ENCODE measurements at regions of chr21 and their contacts with region 1.

Region 1: DNA sequence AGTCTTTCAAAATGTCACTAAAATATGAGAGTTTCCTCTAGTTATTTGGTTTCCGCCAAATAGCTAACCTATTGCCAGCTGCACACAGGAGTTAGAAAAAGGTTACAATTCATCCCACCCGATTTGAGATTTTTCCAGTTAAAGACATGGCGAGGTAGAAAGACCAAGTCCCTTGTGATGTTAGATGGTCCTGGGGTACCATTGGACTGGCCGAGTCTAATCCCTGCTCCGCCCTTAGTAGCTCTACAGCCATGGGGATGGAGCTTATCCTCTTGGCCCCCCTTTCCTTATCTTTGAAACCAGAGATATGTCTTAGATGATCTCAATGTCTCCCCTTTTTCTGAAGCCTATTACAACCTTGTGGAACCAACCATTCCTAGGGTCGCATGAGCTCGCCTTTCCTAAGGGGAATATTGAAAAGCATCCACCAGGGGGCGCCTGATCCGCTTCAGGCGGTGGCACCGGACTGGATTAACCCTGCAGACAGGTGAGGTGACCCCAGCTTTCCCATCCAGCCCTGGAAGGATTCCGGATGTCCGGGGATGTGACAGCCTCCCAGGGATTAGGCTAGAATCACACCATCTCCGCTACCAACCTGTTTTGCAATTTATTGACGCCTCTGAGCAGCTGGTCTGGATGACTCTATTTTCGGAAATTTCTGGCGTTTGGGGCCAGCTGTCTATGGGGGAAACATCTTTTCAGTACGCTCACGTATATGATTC is 68.3 kb upstream of the SIM2 start:
- DNase-seq: peak; percentile 36
- H3K4me3 ChIP-seq: no peak overlapping the region
- H3K27ac ChIP-seq: no peak overlapping the region
- H3K4me1 ChIP-seq: no peaks in the 10 kb centered on the region
- H3K27me3 ChIP-seq: peaks cover 12 to 13% of the 10 kb centered on the region in 2 experiments
- CTCF ChIP-seq: peak; percentile 73 to 76
- POLR2A ChIP-seq: no peak

Region 2: DNA sequence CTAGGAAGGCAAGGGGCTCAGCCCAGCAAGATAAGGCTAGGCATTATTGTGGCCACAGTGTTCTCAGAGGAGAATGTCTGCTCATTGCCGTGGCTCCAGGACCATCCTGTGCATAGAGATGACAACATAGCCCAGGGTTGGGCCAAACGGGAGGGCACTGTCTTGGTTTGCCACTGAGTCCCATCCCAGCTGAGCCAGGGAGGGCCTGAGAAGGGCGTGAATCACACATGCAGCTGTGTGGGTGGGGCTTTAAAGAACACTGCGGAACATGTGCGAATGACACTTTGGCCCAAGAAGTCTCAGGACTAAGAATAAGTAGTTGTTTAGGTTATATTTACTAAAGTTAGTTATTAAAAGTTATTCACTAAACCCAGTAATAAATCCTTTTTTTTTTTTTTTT is 226.9 kb before region 1 on chr21:
- CTCF ChIA-PET with region 1: no interaction called
- POLR2A ChIA-PET with region 1: no interaction called
- dilution Hi-C with region 1: no loop called
- intact Hi-C with region 1: no loop called
- DNase-seq: no peak
- H3K4me3 ChIP-seq: no peak overlapping the region
- H3K27ac ChIP-seq: no peak overlapping the region
- H3K4me1 ChIP-seq: peaks cover 4% of the 10 kb centered on the region
- H3K27me3 ChIP-seq: no peaks in the 10 kb centered on the region
- CTCF ChIP-seq: no peak
- POLR2A ChIP-seq: no peak

Region 3: DNA sequence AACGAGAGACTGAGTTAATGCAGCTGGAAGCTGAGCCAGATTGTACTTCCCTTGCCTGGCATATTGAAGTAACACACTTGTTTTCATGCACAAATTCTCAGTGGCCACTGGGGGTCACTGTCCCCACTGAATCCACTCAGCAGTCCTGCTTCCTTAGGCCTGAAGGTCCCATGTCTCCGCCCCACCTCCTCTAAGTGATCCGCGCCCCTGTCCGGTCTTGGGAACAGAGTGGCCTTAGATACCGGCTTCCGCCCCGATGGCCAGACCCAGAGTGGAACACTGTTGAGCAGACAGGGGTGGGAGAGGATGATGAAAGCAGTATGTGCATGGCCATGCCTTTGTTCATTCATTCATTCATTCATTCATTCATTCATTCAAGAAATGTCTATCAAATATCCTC is 210.7 kb before region 1 on chr21:
- CTCF ChIA-PET with region 1: interaction called, 13 read pairs
- POLR2A ChIA-PET with region 1: no interaction called
- dilution Hi-C with region 1: no loop called
- intact Hi-C with region 1: no loop called
- DNase-seq: peak; percentile 93
- H3K4me3 ChIP-seq: no peak overlapping the region
- H3K27ac ChIP-seq: no peak overlapping the region
- H3K4me1 ChIP-seq: peaks cover 2% of the 10 kb centered on the region
- H3K27me3 ChIP-seq: no peaks in the 10 kb centered on the region
- CTCF ChIP-seq: peak; percentile 76 to 80
- POLR2A ChIP-seq: no peak

Region 4: DNA sequence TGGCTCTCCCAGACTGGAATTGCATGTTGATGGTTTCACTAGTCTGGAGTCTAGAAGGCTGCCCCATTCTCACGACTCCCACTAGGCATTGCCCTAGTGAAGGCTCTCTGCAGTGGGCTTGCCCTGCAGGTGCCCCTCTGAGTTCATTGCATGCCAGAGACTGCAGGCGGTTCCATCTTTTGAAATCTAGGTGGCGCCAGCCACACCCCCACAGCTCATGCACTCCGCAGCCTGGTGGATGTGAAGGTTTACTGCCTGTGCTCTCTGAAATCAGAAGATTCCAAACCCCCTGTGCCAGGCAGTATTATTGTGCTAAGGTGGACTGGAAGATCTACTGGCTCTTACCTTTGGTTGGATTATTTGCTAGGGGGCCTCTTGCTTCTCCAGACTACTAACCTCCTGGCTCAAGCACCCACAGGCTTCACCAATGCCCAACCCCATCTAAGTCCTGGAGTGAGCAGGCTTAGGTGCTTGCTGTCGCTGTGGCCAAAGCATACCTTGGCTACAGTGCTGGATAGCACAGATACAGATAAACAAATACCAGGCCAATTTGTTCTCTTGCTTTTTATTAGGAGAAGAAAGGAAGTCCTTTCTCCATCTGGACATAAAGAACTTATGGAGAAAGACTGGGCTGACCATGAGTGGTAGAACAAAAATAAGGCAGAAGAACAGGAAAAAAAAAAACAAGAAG is 15.2 kb before region 1 on chr21:
- CTCF ChIA-PET with region 1: interaction called, 48 read pairs
- POLR2A ChIA-PET with region 1: no interaction called
- dilution Hi-C with region 1: no loop called
- intact Hi-C with region 1: no loop called
- DNase-seq: no peak
- H3K4me3 ChIP-seq: no peak overlapping the region
- H3K27ac ChIP-seq: no peak overlapping the region
- H3K4me1 ChIP-seq: peaks cover under 1% of the 10 kb centered on the region
- H3K27me3 ChIP-seq: peaks cover 10 to 11% of the 10 kb centered on the region in 2 experiments
- CTCF ChIP-seq: peak; percentile 17 to 37
- POLR2A ChIP-seq: no peak

Region 5: DNA sequence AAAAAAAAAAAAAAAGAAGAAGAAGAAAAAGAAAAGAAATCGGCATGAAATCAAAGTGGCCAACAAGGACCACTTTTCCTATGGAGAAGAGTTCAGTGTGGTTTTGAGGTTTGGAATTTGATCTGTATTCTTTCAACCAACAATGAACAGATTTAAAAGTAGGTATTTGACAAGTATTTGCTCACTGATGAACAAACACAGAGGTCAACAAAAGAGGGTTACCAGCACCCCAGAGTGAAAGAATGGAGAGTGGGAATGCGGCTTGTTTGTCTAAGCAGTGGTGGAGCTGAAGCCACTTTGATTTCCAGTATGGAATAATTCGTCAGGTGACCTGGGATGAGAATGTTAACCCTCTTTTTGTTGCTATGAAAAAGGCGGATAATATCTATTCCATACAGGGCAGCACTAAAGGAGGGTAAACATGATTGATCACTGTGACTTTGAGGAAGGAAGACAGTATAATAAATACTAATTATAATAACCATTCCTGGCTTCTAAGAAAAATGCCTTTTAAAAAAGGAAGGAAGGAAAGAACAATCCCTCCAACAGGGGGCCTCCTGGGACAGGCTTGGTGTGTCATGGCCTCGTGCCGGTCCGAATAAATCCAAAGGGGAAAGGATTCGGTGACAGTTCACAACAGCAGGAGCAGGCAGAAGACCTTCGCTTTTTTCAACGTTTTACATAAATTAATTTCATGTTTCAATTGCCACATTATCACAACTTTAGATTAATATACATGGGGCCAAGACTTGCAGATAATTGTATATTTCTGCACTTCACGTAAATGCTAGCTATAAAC is 31.1 kb after region 1 on chr21:
- CTCF ChIA-PET with region 1: interaction called, 107 read pairs
- POLR2A ChIA-PET with region 1: no interaction called
- dilution Hi-C with region 1: no loop called
- intact Hi-C with region 1: loop called (anchors 1 kb)
- DNase-seq: peak; percentile 41
- H3K4me3 ChIP-seq: no peak overlapping the region
- H3K27ac ChIP-seq: no peak overlapping the region
- H3K4me1 ChIP-seq: no peaks in the 10 kb centered on the region
- H3K27me3 ChIP-seq: peaks cover 16 to 27% of the 10 kb centered on the region in 2 experiments
- CTCF ChIP-seq: peak; percentile 47 to 51
- POLR2A ChIP-seq: no peak

Region 6: DNA sequence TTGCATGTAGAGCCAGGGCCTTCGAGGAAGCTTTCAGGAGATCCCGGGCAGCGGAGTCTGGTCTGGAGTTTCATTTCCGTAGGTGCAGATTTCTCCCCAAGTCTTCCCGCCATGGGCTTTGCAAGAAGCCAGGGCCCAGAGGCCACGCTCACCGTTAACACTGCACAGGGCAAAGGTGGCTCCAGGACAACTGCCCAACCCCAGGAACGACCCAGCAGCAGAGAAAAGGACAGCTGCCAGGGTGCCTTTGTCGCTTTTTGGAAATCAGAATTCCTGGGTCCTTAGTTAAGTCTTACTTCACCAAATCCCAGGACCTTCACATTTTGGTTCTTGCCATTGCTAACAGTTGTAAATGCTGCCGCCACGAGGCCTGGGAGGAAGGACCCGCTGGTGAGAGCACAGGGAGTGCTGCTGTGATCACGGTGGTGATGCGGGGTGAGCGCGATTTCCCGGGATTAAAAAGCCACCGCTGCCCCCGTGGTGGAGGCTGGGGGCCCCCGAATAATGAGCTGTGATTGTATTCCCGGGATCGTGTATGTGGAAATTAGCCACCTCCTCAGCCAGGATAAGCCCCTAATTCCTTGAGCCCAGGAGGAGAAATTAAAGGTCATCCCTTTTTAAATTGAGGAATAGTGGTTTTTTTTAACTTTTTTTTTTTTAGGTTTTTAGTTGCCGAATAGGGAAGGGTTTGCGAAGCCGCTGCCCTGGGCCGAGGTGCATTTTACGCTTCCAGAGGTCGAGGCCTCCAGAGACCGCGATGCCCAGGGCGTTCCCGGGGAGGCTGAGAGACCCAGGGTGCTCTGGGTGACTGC is 76.5 kb after region 1 on chr21:
- CTCF ChIA-PET with region 1: interaction called, 14 read pairs
- POLR2A ChIA-PET with region 1: no interaction called
- dilution Hi-C with region 1: no loop called
- intact Hi-C with region 1: no loop called
- DNase-seq: no peak
- H3K4me3 ChIP-seq: no peak overlapping the region
- H3K27ac ChIP-seq: no peak overlapping the region
- H3K4me1 ChIP-seq: no peaks in the 10 kb centered on the region
- H3K27me3 ChIP-seq: peaks cover 92 to 100% of the 10 kb centered on the region in 2 experiments
- CTCF ChIP-seq: no peak
- POLR2A ChIP-seq: no peak

Region 7: DNA sequence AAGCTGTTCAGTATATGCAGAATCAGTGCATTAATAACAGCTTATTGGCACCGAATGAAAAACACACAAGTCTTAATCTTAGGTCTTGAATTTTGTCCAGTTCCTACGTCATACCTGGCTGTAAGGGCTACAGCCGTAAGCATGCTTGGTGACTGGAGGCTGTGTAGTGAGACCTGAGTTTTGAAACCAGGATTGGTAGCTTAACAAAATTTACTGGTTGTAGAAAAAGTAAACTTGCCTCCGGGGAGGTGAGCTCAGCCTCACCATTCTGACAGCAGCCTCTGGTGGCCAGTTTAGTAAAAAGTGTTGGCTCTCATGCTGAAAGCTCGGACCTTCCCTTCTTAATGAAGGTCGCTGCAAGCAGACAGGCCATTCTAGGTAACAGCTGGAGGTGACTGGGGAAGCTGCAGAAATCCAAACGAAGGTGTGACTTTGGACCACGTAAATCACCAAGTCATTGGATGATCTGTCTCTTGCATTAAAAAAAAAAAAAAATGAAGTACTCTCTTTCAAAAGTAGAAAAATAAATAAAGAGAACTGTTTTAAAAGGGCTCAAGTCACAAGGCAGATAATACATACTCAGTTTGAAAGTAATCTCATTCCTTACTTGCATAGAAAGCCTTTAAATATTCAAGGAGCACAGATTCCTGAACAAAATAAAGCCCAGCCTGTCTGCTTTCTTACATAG is 287.0 kb after region 1 on chr21:
- CTCF ChIA-PET with region 1: interaction called, 76 read pairs
- POLR2A ChIA-PET with region 1: no interaction called
- dilution Hi-C with region 1: no loop called
- intact Hi-C with region 1: no loop called
- DNase-seq: peak; percentile 54
- H3K4me3 ChIP-seq: no peak overlapping the region
- H3K27ac ChIP-seq: no peak overlapping the region
- H3K4me1 ChIP-seq: no peaks in the 10 kb centered on the region
- H3K27me3 ChIP-seq: no peaks in the 10 kb centered on the region
- CTCF ChIP-seq: peak; percentile 57 to 61
- POLR2A ChIP-seq: no peak